Right ventricle myocardium inferior (tissue), 1 donor: ENCODE measurements at regions of chr3 and their contacts with region 1.

Region 1: DNA sequence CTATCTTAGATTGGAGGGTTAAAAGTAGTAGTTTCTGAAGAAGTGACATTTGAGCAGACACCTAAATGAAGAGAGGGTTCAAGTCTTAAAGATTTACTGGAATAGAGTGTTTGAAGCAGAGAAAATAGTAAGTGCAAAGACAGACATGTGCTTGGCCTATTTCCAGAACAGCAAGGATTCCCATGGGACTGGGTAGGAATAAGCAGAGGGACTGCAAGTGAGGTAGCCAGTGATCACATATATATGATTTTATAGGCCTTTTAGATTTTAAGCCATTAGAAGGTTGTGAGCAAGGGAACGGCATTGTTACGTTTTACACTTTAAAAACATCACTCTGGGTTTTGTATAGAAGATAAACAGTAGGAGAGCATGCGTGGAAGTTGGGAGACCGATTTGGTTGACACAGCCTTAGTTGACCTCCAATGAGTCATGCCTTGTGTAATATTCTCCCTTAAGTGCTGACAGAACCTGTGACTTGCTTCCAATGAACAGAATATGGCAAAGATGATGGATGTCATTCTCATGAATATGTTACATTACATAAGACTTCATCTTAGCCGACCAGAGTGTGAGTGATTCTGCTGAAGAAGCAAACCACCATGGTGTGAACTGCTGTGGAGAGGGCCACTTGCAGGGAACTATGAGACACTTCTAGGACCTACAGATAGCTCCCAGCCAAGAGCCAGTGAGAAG is 37.1 kb upstream of the SLC4A7 start:
- DNase-seq: no peak
- ATAC-seq: peak; percentile 89

Region 2: DNA sequence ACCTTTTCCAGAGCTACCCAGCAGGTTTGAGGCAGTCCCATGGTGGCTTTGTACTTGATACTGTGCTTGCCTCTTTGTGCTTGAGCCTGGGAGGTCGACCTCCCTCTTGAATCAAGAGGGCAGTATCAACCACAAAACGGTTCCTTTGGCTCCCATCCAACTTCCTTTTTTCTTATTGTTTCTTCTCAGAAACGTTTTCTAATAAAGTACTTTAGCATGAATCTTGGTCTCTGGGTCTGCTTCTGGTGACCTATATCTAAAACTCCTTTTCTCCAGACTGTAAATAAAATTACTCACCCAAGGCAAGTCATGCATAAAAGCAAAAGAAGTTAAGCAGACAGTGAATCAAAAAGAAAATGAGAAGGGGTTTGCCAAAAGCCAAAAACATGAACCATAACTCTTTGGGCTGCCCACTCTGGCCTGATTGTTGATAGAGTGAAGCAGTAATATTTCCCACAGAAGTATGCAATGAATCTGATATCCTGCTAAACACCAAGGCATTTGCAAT is 75.1 kb after region 1 on chr3:
- intact Hi-C with region 1: loop called (anchors 10 kb)
- DNase-seq: no peak
- ATAC-seq: no peak